ENCODE measurements at regions of chr15 and their contacts with region 1.

Region 1: GRCh38 chr15:58749532-58750337 is at the start of gene ADAM10:
- DNase-seq: peak; percentile 99
- ATAC-seq: peak; percentile 89 to 97
- H3K4me3 ChIP-seq: peak within 1 kb of the TSS; percentile 91
- H3K27ac ChIP-seq: peak within 1 kb of the TSS; percentile 93 to 97
- H3K4me1 ChIP-seq: peaks cover 26% of the 10 kb centered on the region
- CTCF ChIP-seq: no peak
- EP300 ChIP-seq: no peak; a peak in 1 of 5 replicates
- POLR2A ChIP-seq: peak; percentile 90
- RAD21 ChIP-seq: 0 out of 5 replicates have a peak, but pooled peaks have one; percentile 14 to 18
- polyA plus RNA-seq, gene ADAM10: 210 and 236 TPM in 2 replicates

Region 2: GRCh38 chr15:58457381-58457965 is 292.3 kb before region 1 on chr15:
- CTCF ChIA-PET with region 1: no interaction called
- POLR2A ChIA-PET with region 1: no interaction called
- DNase-seq: no peak
- ATAC-seq: peak in 1 of 2 experiments; percentile 37; a peak in 3 of 6 replicates
- H3K4me3 ChIP-seq: no peak overlapping the region
- H3K27ac ChIP-seq: peak overlapping the region; percentile 52 to 70; a peak in 5 of 6 replicates
- H3K4me1 ChIP-seq: peaks cover 32% of the 10 kb centered on the region
- CTCF ChIP-seq: no peak
- EP300 ChIP-seq: no peak
- POLR2A ChIP-seq: no peak
- RAD21 ChIP-seq: no peak

Region 3: DNA sequence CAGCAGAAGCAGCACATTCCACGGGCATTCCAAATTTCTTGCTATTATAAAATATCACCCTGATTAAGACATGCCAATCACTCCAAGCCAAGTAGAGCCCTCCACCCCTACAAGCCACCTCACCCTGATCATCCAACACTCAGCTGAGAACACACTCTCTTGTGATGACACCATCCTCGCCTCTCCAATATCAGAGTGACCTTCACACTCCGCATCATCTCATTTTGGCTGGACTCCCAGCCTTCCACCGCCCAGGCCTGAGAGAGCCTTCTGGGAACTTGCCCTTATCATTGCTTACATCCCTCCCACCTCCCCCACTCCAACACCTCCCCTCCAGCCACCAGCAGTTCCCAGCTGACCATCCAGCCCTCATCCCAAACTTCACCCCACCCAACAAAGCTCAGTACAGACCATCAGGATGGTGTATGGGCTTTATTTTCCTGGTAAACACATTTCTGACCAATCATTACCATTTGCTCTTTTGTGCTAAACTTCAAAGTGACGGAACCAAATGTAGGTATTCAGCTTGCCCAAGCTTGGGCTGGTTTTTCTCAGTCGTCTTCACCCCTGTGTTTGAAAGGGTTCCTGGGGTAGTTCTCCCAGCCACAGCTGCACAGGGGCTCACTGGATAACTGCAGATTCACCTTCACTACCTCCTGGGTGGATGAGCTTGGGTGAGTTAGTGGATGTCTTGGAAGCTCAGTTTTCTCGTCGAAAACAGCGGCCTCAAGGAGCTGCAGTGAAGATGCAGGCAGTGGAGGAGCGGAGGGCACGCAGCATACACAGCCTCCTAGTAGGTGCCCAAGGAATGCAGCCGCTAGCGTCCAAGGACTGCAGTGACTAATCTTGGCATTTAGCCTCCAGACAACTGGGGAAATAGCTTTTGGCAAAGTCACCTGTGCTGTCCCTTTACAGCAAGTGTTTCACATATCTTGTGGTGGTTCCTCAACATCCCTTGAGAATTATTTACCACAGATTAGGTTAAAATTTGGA is 202.8 kb before region 1 on chr15:
- CTCF ChIA-PET with region 1: no interaction called
- POLR2A ChIA-PET with region 1: interaction called, 19 read pairs
- DNase-seq: peak; percentile 93 to 95
- ATAC-seq: peak; percentile 93 to 96
- H3K4me3 ChIP-seq: peak overlapping the region; percentile 18; the same call in 1 of the 3 replicates
- H3K27ac ChIP-seq: peak overlapping the region; percentile 95
- H3K4me1 ChIP-seq: peaks cover 51% of the 10 kb centered on the region
- CTCF ChIP-seq: no peak
- EP300 ChIP-seq: peak; percentile 71 to 84; a peak in 3 of 5 replicates
- POLR2A ChIP-seq: no peak
- RAD21 ChIP-seq: peak; percentile 49 to 50; a peak in 4 of 5 replicates